Activated CD4-positive, alpha-beta T cell treated with anti-CD3 and anti-CD28 coated beads, Interleukin-2, amount 10 ng/mL, durations not matched to agents 24 days and 14 days (primary cell): ENCODE measurements at regions of chr22 and their contacts with region 1.

Region 1: GRCh38 chr22:28907311-28908008 is 24.1 kb downstream of the ZNRF3 start:
- DNase-seq: peak; percentile 64
- H3K4me3 Mint-ChIP-seq: peak overlapping the region; percentile 43
- H3K27ac Mint-ChIP-seq: peak overlapping the region; percentile 62
- H3K4me1 Mint-ChIP-seq: peaks cover 22% of the 10 kb centered on the region
- H3K27me3 Mint-ChIP-seq: peaks cover 65% of the 10 kb centered on the region

Region 2: DNA sequence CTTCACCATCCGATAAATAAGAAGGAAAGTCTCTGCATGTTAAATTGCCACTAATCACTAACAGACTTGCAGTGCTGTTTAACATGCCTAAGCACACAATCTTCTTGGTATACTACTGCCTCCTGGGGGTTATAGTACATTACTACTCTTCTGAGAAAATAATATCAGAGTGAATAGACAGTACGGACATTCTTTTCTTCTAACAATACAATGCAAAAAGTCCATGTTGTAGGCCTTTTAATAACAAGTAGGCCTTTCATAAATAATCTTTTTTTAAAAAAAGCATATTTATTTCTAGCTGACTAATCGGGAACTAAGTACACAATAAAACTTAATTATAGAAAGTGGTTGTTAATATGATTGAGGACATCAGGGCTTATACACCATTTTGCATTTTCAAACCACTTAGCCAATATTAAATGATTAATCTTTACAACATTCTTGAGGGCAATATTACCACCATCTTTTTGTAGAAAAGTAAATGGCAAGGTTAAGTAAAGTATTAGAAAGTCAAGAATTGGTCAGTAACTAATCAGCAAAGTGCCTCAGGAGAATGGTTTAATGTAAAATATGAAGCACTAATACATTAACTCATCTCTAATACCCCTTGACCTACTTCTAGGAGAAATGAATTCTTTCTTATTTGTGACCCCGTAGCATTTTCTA is 312.5 kb before region 1 on chr22:
- intact Hi-C with region 1: no loop called
- DNase-seq: no peak
- H3K4me3 Mint-ChIP-seq: no peak overlapping the region
- H3K27ac Mint-ChIP-seq: no peak overlapping the region
- H3K4me1 Mint-ChIP-seq: no peaks in the 10 kb centered on the region
- H3K27me3 Mint-ChIP-seq: peaks cover 28% of the 10 kb centered on the region

Region 3: GRCh38 chr22:28674121-28674563 is 233.3 kb before region 1 on chr22:
- intact Hi-C with region 1: loop called (anchors 1 kb)
- DNase-seq: peak; percentile 86
- H3K4me3 Mint-ChIP-seq: peak overlapping the region; percentile 77
- H3K27ac Mint-ChIP-seq: peak overlapping the region; percentile 98
- H3K4me1 Mint-ChIP-seq: peaks cover 27% of the 10 kb centered on the region
- H3K27me3 Mint-ChIP-seq: peaks cover 66% of the 10 kb centered on the region

Region 4: GRCh38 chr22:28772633-28773460 is 134.6 kb before region 1 on chr22 and contains the start of gene CCDC117:
- intact Hi-C with region 1: loop called (anchors 2 kb)
- DNase-seq: peak; percentile 98
- H3K4me3 Mint-ChIP-seq: peak within 1 kb of the TSS; percentile 89
- H3K27ac Mint-ChIP-seq: peak within 1 kb of the TSS; percentile 96
- H3K4me1 Mint-ChIP-seq: peaks cover 22% of the 10 kb centered on the region
- H3K27me3 Mint-ChIP-seq: peaks cover 4% of the 10 kb centered on the region
- total RNA-seq, gene CCDC117: 41.2 and 47.7 TPM in 2 replicates

Region 5: DNA sequence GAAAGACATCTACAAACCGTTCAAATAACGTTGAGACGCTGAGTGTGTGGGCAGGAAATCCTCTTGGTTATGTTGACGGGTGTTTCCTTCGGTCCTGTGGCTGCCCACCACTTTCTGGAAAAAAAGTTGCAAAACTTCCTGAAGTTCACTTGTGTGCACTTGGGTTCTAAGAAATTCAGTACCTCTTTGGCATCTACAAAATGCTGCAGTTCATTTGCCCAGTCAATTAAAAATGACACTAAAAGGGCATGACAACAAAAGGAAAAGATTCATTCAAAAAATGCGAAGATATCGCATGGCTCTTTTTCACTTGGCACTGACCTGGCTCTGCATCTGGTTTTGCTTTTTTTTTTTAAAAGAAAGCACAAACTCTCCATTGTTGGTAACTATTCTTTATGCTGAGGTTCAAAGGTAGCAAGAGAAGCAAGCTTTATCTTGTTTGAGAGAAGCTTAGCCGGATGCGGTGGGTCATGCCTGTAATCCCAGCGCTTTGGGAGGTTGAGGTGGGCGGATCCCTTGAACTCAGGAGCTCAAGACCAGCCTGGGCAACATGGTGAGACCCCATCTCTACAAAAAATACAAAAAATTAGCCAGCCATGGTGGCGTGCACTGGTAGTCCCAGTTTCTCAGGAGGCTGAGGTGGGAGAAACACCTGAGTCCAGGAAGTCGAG is 96.5 kb before region 1 on chr22:
- intact Hi-C with region 1: loop called (anchors 2 kb)
- DNase-seq: peak; percentile 89
- H3K4me3 Mint-ChIP-seq: peak overlapping the region; percentile 73
- H3K27ac Mint-ChIP-seq: peak overlapping the region; percentile 89
- H3K4me1 Mint-ChIP-seq: peaks cover 76% of the 10 kb centered on the region
- H3K27me3 Mint-ChIP-seq: no peaks in the 10 kb centered on the region

Region 6: GRCh38 chr22:28874871-28875270 is 32.6 kb before region 1 on chr22:
- intact Hi-C with region 1: no loop called
- DNase-seq: no peak
- H3K4me3 Mint-ChIP-seq: no peak overlapping the region
- H3K27ac Mint-ChIP-seq: no peak overlapping the region
- H3K4me1 Mint-ChIP-seq: peaks cover 4% of the 10 kb centered on the region
- H3K27me3 Mint-ChIP-seq: peaks cover 15% of the 10 kb centered on the region

Region 7: GRCh38 chr22:28951969-28952521 is 44.6 kb after region 1 on chr22:
- intact Hi-C with region 1: loop called (anchors 2 kb)
- DNase-seq: no peak
- H3K4me3 Mint-ChIP-seq: no peak overlapping the region
- H3K27ac Mint-ChIP-seq: no peak overlapping the region
- H3K4me1 Mint-ChIP-seq: peaks cover 12% of the 10 kb centered on the region
- H3K27me3 Mint-ChIP-seq: peaks cover 76% of the 10 kb centered on the region

Region 8: GRCh38 chr22:28976588-28976987 is 69.1 kb after region 1 on chr22:
- intact Hi-C with region 1: no loop called
- DNase-seq: no peak
- H3K4me3 Mint-ChIP-seq: no peak overlapping the region
- H3K27ac Mint-ChIP-seq: no peak overlapping the region
- H3K4me1 Mint-ChIP-seq: peaks cover 2% of the 10 kb centered on the region
- H3K27me3 Mint-ChIP-seq: peaks cover 64% of the 10 kb centered on the region